ENCODE measurements at regions of chr11 and their contacts with region 1.

Region 1: DNA sequence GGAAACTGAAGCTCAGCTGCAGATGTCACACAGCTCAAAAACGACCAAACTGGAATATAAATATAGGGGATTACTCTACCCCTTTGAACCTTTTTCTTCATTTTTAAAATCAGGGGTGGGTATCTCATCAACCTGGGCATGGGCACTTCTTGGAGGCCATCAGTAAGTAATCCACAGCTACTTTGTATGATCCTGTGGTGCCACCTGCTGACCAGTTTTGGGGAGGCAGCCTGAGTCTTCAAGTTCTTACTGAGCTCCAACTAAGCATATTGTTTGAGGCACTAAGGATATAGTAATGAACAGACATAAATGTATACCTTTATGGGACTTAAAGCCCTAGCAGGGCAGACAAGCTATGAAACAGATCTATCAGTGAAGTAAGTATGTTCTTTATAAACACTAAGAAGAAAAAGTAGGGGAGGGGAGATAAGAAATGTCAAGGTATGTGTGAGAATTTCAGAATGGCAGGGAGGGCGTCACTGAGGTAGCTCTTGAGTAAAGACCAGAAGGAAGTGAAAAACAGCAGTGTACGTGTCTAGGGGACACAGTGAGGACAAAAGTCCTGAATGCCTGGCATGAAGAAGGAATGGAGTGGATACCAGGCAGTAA is 18.4 kb downstream of the TUB start:
- DNase-seq: peak; percentile 88
- H3K4me3 Mint-ChIP-seq: no peak overlapping the region
- H3K27ac Mint-ChIP-seq: no peak overlapping the region
- H3K4me1 Mint-ChIP-seq: no peaks in the 10 kb centered on the region
- H3K27me3 Mint-ChIP-seq: no peaks in the 10 kb centered on the region

Region 2: GRCh38 chr11:7688238-7688826 is 411.1 kb before region 1 on chr11:
- CTCF ChIA-PET with region 1: no interaction called
- intact Hi-C with region 1: loop called (anchors 10 kb)
- DNase-seq: peak; percentile 35
- H3K4me3 Mint-ChIP-seq: no peak overlapping the region
- H3K27ac Mint-ChIP-seq: no peak overlapping the region
- H3K4me1 Mint-ChIP-seq: peaks cover 6% of the 10 kb centered on the region
- H3K27me3 Mint-ChIP-seq: peaks cover 26% of the 10 kb centered on the region

Region 3: DNA sequence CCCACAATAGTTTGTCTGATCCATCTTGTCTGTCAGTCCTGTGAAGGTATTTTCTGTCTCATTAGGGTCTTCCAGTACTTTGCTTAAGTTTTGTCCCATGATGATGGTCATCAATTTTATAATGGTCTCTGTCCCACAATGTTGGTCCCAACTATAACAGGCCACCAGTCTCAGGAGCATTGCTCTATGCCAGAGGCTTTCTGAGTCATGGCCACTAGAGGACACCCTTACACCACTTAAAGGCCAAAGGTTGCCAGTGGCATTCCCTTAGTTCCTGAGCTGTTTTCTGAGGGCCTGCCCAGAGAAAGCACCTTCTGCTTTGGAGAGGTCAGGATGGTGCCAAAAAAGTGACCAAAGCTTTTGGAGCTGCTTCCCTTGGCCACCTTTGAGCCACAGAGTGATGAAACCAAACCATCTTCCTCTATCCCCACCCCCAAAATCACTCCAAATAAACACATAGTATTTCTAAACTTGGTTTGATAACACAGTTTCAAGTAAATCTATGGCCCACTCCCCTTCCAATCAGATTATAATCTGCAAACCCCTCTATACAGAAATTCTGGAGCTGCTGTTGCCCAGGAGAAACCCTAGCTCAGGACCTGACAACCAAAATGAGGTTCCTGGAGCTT is 92.9 kb before region 1 on chr11:
- CTCF ChIA-PET with region 1: interaction called, 90 read pairs
- intact Hi-C with region 1: loop called (anchors 1 kb)
- DNase-seq: peak; percentile 63
- H3K4me3 Mint-ChIP-seq: no peak overlapping the region
- H3K27ac Mint-ChIP-seq: no peak overlapping the region
- H3K4me1 Mint-ChIP-seq: no peaks in the 10 kb centered on the region
- H3K27me3 Mint-ChIP-seq: no peaks in the 10 kb centered on the region

Region 4: GRCh38 chr11:8033305-8034105 is 65.9 kb before region 1 on chr11:
- CTCF ChIA-PET with region 1: interaction called, 92 read pairs
- intact Hi-C with region 1: loop called (anchors 1 kb)
- DNase-seq: peak; percentile 62
- H3K4me3 Mint-ChIP-seq: no peak overlapping the region
- H3K27ac Mint-ChIP-seq: no peak overlapping the region
- H3K4me1 Mint-ChIP-seq: peaks cover 4% of the 10 kb centered on the region
- H3K27me3 Mint-ChIP-seq: peaks cover 30% of the 10 kb centered on the region

Region 5: GRCh38 chr11:8080674-8081590 is 18.5 kb before region 1 on chr11 and contains the start of gene TUB:
- CTCF ChIA-PET with region 1: interaction called, 15 read pairs
- intact Hi-C with region 1: no loop called
- DNase-seq: peak; percentile 9
- H3K4me3 Mint-ChIP-seq: peak within 1 kb of the TSS; percentile 59
- H3K27ac Mint-ChIP-seq: no peak within 1 kb of the TSS
- H3K4me1 Mint-ChIP-seq: no peaks in the 10 kb centered on the region
- H3K27me3 Mint-ChIP-seq: peaks cover 49% of the 10 kb centered on the region
- total RNA-seq, gene TUB: 0.67 to 0.69 TPM